ENCODE measurements at regions of chr1 and their contacts with region 1.

Region 1: GRCh38 chr1:197868751-197869489 is 33.5 kb upstream of the C1orf53 start:
- DNase-seq: peak; percentile 55 to 83 (median 80)
- H3K4me3 ChIP-seq: no peak overlapping the region
- H3K27ac ChIP-seq: no peak overlapping the region
- H3K4me1 ChIP-seq: no peaks in the 10 kb centered on the region
- H3K27me3 ChIP-seq: no peaks in the 10 kb centered on the region

Region 2: GRCh38 chr1:197692965-197693364 is 176.0 kb before region 1 on chr1:
- CTCF ChIA-PET with region 1: interaction called, 21 read pairs
- POLR2A ChIA-PET with region 1: no interaction called
- DNase-seq: peak; percentile 12 to 27 (median 25)
- H3K4me3 ChIP-seq: no peak overlapping the region
- H3K27ac ChIP-seq: no peak overlapping the region
- H3K4me1 ChIP-seq: peaks cover 0 to 1% (median 0%) of the 10 kb centered on the region in 4 experiments
- H3K27me3 ChIP-seq: no peaks in the 10 kb centered on the region

Region 3: GRCh38 chr1:197884173-197884572 is 15.3 kb after region 1 on chr1:
- CTCF ChIA-PET with region 1: interaction called, 12 read pairs
- POLR2A ChIA-PET with region 1: no interaction called
- DNase-seq: no peak
- H3K4me3 ChIP-seq: no peak overlapping the region
- H3K27ac ChIP-seq: no peak overlapping the region
- H3K4me1 ChIP-seq: no peaks in the 10 kb centered on the region
- H3K27me3 ChIP-seq: no peaks in the 10 kb centered on the region

Region 4: GRCh38 chr1:198018529-198018928 is 149.6 kb after region 1 on chr1:
- CTCF ChIA-PET with region 1: no interaction called
- POLR2A ChIA-PET with region 1: no interaction called
- DNase-seq: peak in 1 of 3 donors; percentile 1
- H3K4me3 ChIP-seq: no peak overlapping the region
- H3K27ac ChIP-seq: no peak overlapping the region
- H3K4me1 ChIP-seq: no peaks in the 10 kb centered on the region
- H3K27me3 ChIP-seq: no peaks in the 10 kb centered on the region